Activated T-helper 2 cell treated with anti-CD3 and anti-CD28 coated beads, Interferon-gamma antibody, Interleukin-2, Interleukin-4, amounts not matched to agents 10 μg/mL and 5 μg/mL and 100 μg/mL, durations not matched to agents 14 hours and 24 hours and 36 hours (primary cell): ENCODE measurements at regions of chr9 and their contacts with region 1.

Region 1: DNA sequence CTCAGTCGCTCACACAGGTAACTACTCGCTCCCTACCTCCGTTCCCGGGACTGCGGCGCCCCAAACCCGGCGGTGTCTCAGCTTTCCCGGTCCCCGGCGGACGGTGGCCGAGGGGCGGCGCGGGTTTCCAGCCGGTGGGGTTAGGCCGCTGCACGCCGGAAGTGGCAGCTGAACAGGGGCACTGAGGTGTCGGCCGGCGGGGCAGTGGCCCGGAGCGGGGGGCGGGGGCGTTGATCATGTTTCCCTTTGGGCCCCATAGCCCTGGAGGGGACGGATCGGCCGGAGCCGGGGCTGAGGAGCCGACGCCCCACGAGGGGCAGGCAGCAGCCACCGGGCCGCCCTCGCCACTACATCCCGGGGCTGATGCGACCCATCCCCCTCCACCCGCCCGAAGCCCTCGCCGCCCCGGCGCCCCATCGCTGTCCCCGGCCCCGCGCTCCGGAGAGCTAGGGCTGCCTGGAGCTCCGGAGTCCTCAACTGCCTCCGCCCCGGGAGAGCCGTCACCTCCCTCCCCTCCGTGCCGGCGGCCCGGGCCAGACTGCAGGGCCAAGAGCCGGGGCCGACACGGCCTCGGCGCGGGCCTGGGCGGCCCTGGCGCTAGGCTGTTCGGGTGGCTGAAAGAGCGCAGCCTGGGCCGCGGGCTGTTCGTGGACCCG is at the start of gene DCAF10:
- DNase-seq: peak; percentile 86
- H3K4me3 Mint-ChIP-seq: peak within 1 kb of the TSS; percentile 89
- H3K27ac Mint-ChIP-seq: peak within 1 kb of the TSS; percentile 77
- H3K4me1 Mint-ChIP-seq: peaks cover 28% of the 10 kb centered on the region
- H3K27me3 Mint-ChIP-seq: no peaks in the 10 kb centered on the region
- total RNA-seq, gene DCAF10: 17.4 and 18.4 TPM in 2 replicates

Region 2: DNA sequence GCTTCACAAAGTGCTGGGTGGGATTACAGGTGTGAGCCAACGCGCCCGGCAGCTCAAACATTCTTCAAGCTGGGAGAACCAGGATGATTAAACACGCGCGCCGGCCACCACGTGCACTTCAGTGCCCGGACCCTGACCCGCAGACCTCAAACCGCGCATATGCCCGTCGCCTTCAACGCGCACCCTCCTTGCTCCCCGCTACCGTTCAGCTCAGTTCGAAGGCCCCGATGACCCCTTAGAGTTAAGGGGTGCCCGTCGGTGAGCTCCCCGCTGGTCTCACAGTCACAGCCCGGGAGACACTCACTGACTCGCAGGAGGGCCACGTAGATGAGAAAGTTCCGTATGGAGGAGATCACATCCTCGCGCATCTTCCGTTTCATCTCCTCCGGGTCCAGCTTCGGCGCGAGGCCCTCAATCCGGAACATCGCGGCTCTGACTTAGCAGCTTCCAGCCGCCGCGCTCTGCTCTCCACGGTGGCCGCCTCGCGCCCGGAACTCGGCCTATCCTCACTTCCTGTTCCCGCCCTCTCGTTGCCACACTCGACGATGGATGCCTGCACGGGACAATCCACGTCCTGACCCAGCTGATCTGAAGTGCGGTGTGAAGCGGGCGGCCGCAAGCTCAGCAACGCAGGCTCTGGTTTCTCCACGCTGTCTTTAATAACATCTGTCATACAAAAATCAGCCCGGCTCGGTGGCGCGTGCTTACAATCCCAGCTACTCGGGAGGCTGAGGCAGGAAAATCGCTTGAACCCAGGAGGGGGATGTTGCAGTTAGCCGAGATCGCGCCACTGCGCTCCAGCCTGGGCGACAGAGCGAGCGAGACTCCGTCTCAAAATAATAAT is 208.4 kb before region 1 on chr9 and contains the start of gene TOMM5:
- intact Hi-C with region 1: loop called (anchors 2 kb)
- DNase-seq: peak; percentile 89
- H3K4me3 Mint-ChIP-seq: peak within 1 kb of the TSS; percentile 98
- H3K27ac Mint-ChIP-seq: peak within 1 kb of the TSS; percentile 97
- H3K4me1 Mint-ChIP-seq: peaks cover 22% of the 10 kb centered on the region
- H3K27me3 Mint-ChIP-seq: peaks cover 16% of the 10 kb centered on the region
- total RNA-seq, gene TOMM5: 153 and 155 TPM in 2 replicates

Region 3: DNA sequence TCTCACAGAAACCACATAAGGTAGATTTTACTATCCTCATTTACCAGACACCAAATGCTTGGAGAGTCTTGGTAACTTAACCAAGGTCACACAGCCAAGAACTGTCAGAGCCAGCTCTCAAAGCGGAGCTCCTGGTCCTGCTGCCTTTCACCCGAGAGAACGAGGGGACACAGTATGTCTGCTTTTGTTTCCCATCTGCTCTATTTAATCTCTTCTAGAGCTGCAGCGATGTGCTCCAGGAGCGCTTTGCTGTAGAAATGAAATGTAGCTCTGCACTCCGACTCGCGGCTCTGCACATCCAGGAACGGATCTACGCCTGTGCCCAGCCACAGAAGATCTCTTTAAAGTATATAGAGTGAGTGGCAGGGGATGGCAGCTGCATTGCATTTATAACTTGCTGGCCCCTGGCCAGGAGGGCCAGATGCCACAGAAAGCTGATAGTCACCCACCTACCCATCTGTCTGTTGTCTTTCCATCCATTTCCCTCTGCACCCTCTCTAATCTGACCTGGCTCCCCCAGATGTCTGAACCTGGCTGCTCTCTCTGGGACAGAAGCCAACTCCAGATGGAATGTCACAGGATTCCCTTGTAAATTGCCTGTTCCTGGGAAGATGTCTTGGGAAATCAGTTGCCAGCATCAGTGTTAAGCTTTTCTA is 68.5 kb before region 1 on chr9:
- intact Hi-C with region 1: no loop called
- DNase-seq: no peak
- H3K4me3 Mint-ChIP-seq: no peak overlapping the region
- H3K27ac Mint-ChIP-seq: no peak overlapping the region
- H3K4me1 Mint-ChIP-seq: no peaks in the 10 kb centered on the region
- H3K27me3 Mint-ChIP-seq: peaks cover 24% of the 10 kb centered on the region

Region 4: GRCh38 chr9:37753489-37754190 is 47.1 kb before region 1 on chr9 and contains the start of gene TRMT10B:
- intact Hi-C with region 1: loop called (anchors 2 kb)
- DNase-seq: peak; percentile 61
- H3K4me3 Mint-ChIP-seq: peak within 1 kb of the TSS; percentile 97
- H3K27ac Mint-ChIP-seq: peak within 1 kb of the TSS; percentile 91
- H3K4me1 Mint-ChIP-seq: peaks cover 17% of the 10 kb centered on the region
- H3K27me3 Mint-ChIP-seq: no peaks in the 10 kb centered on the region
- total RNA-seq, gene TRMT10B: 11.8 and 12.1 TPM in 2 replicates

Region 5: GRCh38 chr9:37784616-37785483 is 15.9 kb before region 1 on chr9 and contains the start of gene EXOSC3:
- intact Hi-C with region 1: loop called (anchors 1 kb)
- DNase-seq: peak; percentile 85
- H3K4me3 Mint-ChIP-seq: peak within 1 kb of the TSS; percentile 98
- H3K27ac Mint-ChIP-seq: peak within 1 kb of the TSS; percentile 96
- H3K4me1 Mint-ChIP-seq: peaks cover 29% of the 10 kb centered on the region
- H3K27me3 Mint-ChIP-seq: no peaks in the 10 kb centered on the region
- total RNA-seq, gene EXOSC3: 85.8 and 86.3 TPM in 2 replicates